T-cell (primary cell): ENCODE measurements at regions of chr6 and their contacts with region 1.

Region 1: DNA sequence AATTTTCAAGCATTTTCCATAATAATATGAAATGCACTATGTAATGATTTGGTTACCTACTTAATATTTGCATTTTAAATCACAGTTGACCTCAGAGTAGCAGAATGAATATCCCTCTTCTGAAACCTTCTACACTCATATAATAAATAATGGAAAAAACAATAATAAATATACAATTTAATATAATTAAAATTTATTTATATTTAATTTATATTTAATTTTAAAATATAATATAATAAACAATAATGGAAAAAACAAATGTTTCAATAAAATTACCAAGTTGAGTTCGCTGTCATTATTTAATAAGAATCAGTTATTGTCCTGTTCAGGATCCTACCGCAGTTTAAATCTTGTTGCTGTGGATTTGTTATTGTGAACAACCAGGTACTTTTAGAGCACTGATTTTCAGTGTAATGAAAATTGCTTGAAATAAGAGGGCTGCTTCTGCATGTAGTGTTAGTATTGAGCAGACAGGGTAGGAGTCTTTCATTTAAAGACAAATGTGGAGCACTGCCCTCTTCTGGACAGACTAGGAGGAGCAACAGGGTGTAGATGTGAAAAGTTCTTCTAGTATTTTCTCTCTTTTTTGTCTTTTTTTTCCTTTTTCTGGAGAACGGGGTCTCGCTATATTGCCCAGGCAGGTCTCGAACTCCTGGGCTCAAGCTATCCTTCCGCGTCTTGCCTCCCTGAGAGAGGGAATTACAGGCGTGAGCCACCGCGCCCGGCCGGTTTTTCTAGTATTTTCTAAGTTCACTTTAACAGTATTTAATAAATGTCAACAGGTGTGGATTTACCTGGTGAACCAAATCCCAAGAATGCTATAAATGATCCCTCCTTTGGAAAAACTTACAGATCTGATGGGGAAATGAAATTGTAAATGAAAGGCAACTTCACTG is 13.6 kb downstream of the TRAPPC3L start:
- DNase-seq: peak in 34 of 35 experiments; percentile 17 to 81 (median 52)
- ATAC-seq: peak; percentile 77 to 97 (median 92)
- H3K4me3 ChIP-seq: no peak overlapping the region
- H3K4me3 Mint-ChIP-seq: no peak overlapping the region
- H3K27ac ChIP-seq: no peak overlapping the region
- H3K27ac Mint-ChIP-seq: no peak overlapping the region
- H3K4me1 ChIP-seq: no peaks in the 10 kb centered on the region
- H3K4me1 Mint-ChIP-seq: no peaks in the 10 kb centered on the region
- H3K27me3 ChIP-seq: no peaks in the 10 kb centered on the region
- H3K27me3 Mint-ChIP-seq: peaks cover 18 to 19% of the 10 kb centered on the region in 2 donors

Region 2: GRCh38 chr6:116287689-116288282 is 244.1 kb before region 1 on chr6:
- CTCF ChIA-PET with region 1: interaction called, 43 to 55 read pairs
- POLR2A ChIA-PET with region 1: no interaction called
- DNase-seq: peak in 1 of 35 experiments; percentile 69
- ATAC-seq: peak; percentile 68 to 78 (median 72)
- H3K4me3 ChIP-seq: no peak overlapping the region
- H3K4me3 Mint-ChIP-seq: no peak overlapping the region
- H3K27ac ChIP-seq: no peak overlapping the region
- H3K27ac Mint-ChIP-seq: no peak overlapping the region
- H3K4me1 ChIP-seq: no peaks in the 10 kb centered on the region
- H3K4me1 Mint-ChIP-seq: peaks cover 0 to 3% (median 1%) of the 10 kb centered on the region in 3 donors
- H3K27me3 ChIP-seq: no peaks in the 10 kb centered on the region
- H3K27me3 Mint-ChIP-seq: no peaks in the 10 kb centered on the region

Region 3: DNA sequence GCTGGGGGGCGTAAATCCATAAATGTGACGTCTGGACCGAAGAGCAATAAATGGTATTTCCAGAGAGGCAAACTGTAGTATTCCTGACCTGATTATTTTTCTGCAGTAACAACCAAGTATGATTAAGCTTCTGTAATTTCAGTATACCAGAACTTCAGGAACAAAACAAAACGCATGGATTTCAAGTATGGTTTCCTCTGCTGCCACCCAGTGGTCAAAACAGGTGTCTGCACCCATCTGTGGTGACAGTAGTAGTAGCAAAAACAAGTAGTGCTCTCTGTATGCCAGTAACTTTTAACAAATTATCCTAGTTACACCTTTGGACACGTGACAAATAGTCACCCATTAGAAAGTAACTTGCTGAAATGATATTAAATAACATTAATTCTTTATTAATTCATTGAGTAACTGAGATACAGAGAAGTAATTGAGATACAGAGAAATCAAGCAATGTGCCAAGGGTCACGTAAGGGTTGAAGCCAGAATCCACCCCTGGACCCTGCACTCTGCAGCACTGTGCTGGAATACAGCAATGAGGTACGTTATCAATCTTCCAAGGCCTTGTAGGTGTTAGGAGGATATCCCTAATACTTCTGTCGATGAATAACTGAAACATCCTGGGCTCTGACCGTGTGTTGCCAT is 29.6 kb after region 1 on chr6:
- CTCF ChIA-PET with region 1: interaction called, 11 to 18 read pairs
- POLR2A ChIA-PET with region 1: no interaction called
- DNase-seq: peak in 34 of 35 experiments; percentile 20 to 81 (median 52)
- ATAC-seq: peak; percentile 65 to 76 (median 73)
- H3K4me3 ChIP-seq: no peak overlapping the region
- H3K4me3 Mint-ChIP-seq: no peak overlapping the region
- H3K27ac ChIP-seq: no peak overlapping the region
- H3K27ac Mint-ChIP-seq: no peak overlapping the region
- H3K4me1 ChIP-seq: peaks cover 0 to 9% of the 10 kb centered on the region in 2 experiments
- H3K4me1 Mint-ChIP-seq: peaks cover 7 to 17% (median 8%) of the 10 kb centered on the region in 3 donors
- H3K27me3 ChIP-seq: peaks cover 0 to 19% of the 10 kb centered on the region in 2 experiments
- H3K27me3 Mint-ChIP-seq: peaks cover 22 to 25% of the 10 kb centered on the region in 2 donors

Region 4: DNA sequence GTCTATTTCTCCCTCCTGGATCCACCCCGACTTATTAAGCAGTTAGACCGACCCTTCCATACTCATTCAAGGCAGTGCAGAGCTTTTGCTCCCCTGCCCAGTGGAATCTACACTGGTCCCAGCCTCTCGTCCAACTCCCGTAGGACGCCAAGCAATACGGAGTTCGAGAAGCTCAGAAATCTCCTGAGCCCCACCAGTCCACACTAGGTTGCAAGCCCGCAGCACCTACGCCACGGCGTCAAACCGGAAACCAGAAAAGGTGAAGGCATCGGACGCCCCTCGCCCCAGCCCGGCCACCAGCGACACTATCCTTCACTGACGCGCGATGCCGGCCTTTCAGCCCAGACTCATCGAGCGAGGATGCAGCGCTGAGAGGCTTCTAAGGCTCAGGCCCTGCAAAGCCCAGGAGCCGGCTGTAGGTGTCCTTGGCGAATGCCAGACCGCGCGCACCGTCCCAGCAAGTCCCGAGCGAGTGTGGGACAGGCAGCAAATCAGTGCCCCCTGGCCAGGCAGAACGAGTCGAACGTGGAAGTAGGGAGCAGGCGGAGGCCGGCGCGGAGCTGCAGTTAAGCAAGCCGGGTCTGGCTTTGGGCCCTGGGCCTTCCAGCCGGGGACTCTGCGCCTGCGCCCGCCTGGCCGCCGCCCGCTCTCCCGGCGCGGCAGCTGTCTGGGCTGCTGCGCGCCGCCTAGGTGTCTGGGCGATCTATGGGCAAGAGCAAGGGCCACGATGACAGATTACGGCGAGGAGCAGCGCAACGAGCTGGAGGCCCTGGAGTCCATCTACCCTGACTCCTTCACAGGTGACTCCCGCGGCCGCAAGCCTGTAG is 39.1 kb after region 1 on chr6 and contains the start of gene RWDD1:
- CTCF ChIA-PET with region 1: interaction called in 1 of 2 experiments, 12 read pairs
- POLR2A ChIA-PET with region 1: no interaction called
- DNase-seq: peak; percentile 94 to 99 (median 98)
- ATAC-seq: peak; percentile 92 to 97 (median 93)
- H3K4me3 ChIP-seq: peak within 1 kb of the TSS; percentile 92 to 95
- H3K4me3 Mint-ChIP-seq: peak within 1 kb of the TSS; percentile 92 to 100 (median 98)
- H3K27ac ChIP-seq: peak within 1 kb of the TSS; percentile 99
- H3K27ac Mint-ChIP-seq: peak within 1 kb of the TSS; percentile 97 to 99
- H3K4me1 ChIP-seq: peaks cover 8 to 25% of the 10 kb centered on the region in 2 experiments
- H3K4me1 Mint-ChIP-seq: peaks cover 50 to 58% (median 51%) of the 10 kb centered on the region in 3 donors
- H3K27me3 ChIP-seq: no peaks in the 10 kb centered on the region
- H3K27me3 Mint-ChIP-seq: no peaks in the 10 kb centered on the region
- total RNA-seq, gene RWDD1: 29.3 to 48.9 (median 35.8) TPM

Region 5: GRCh38 chr6:116812051-116812650 is 280.2 kb after region 1 on chr6:
- CTCF ChIA-PET with region 1: no interaction called
- POLR2A ChIA-PET with region 1: no interaction called
- DNase-seq: no peak
- ATAC-seq: no peak
- H3K4me3 ChIP-seq: no peak overlapping the region
- H3K4me3 Mint-ChIP-seq: no peak overlapping the region
- H3K27ac ChIP-seq: no peak overlapping the region
- H3K27ac Mint-ChIP-seq: no peak overlapping the region
- H3K4me1 ChIP-seq: no peaks in the 10 kb centered on the region
- H3K4me1 Mint-ChIP-seq: no peaks in the 10 kb centered on the region
- H3K27me3 ChIP-seq: peaks cover 0 to 2% of the 10 kb centered on the region in 2 experiments
- H3K27me3 Mint-ChIP-seq: peaks cover 1 to 17% of the 10 kb centered on the region in 2 donors